HEK293T (cell line): ENCODE measurements at regions of chr6 and their contacts with region 1.

Region 1: DNA sequence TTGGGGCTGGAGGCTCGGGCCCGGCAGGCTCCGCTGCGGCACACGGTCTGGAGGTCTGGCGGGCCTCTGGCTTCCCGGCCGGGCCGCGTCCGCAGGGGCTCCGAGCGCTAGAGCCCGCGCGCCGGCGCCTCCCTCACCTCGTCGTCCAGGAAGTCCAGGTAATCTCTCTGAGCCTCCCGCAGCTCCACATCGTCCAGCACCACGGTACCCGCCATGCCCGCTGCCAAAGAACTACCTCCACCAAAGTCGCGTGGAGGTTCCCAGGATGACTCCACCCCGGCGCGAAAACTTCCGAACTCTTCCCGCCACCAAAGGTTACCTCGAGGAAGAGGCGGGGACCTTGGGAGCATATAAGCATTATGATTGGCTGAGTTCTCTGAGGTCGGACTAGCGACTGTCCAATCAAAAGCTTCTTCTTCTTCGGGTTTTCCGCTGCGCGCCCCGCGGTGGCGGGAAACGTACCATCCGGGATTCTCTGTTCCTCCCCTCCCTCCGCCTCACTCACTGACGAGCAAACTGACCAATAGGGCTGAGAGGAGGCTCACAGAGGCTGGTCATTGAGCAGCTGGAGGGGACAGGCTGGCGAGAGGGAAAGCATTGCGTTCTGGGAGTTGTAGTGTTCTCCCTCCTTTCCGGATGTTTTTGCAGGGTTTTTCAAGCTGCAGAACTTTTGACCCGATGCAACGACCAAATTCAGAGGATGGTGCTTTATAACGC is at the start of gene MCM3:
- DNase-seq: peak; percentile 92

Region 2: GRCh38 chr6:52186480-52186879 is 98.1 kb before region 1 on chr6:
- CTCF ChIA-PET with region 1: no interaction called
- POLR2A ChIA-PET with region 1: no interaction called
- DNase-seq: no peak

Region 3: DNA sequence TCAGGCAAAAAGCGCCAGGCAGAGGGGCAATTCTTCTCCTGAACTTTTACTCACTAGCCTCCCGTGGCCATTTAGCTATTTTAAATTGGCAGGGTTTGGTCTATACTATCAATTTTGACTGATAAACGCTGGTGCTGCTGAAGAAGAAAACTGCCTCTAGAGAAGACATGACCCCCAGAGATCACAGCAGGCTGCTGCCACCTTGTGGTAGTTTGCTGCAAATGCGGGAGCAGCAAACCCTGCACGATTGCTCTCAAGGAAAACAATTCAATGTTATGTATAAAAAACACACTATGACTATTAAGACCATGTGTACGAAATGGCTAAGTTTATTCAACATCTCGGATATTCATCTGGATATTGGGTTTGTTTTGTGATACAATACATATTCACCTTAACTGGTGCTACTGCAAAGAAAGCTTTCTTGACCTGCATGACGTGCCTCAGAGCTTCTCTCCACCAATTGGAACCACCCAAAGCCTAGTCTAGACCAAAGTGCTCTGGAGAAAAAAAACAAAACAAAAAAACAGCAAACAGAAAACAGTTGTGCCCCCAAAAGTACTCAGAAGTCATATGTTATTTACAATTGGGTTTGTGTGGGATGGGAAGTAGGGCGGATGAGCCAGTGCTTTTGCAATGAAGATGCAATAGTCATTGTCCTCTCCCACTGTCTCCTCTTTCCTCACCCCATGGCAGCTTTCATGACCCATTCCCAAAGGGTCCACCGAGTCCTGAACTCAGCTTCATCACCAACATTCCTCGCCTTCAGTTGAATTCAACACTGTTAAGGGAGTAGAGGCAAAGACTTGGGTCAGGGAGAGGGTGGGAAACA is 20.7 kb before region 1 on chr6:
- CTCF ChIA-PET with region 1: interaction called, 5 read pairs
- POLR2A ChIA-PET with region 1: interaction called, 10 read pairs
- DNase-seq: peak; percentile 70

Region 4: GRCh38 chr6:52361945-52362442 is 77.4 kb after region 1 on chr6 and contains the start of gene PAQR8:
- CTCF ChIA-PET with region 1: interaction called, 5 read pairs
- POLR2A ChIA-PET with region 1: interaction called, 69 read pairs
- DNase-seq: peak; percentile 86

Region 5: DNA sequence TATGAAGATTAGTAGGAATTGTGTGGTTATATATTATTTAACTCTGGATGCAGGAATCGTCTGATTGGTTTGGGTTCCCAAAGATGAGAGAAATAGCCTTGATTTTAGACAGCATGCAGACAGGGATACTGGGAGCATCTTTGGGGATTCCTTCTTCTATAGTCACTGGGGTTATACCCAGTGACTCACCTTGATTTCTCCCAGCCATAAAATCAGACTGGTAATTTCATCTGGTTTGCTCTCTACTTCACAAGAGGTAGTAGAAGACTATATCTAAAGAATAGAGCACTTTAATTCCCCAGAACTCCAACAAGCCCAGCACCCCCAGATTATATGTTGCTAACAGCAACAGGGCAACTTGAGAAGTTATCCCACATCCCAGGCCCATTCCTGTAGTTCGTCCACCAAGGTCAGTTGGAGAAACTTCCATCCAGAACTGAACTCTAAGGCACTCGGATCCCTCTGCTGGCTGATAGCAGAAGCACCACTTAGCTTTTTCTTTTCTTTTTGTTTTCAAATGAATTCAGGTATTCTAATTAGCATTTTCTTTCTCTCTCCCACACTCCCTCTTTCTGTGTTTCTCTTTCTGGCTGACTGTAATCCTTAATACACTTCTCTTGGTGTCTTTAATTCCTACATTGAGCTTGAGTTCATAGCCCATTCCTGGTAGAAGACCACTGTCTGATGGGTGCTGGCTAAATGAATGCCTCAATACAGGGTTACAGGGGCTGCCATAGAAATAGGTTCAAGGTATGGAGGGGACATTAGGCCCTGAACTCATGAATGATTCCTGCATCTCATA is 115.1 kb after region 1 on chr6:
- CTCF ChIA-PET with region 1: interaction called, 21 read pairs
- POLR2A ChIA-PET with region 1: interaction called, 18 read pairs
- DNase-seq: peak; percentile 65

Region 6: DNA sequence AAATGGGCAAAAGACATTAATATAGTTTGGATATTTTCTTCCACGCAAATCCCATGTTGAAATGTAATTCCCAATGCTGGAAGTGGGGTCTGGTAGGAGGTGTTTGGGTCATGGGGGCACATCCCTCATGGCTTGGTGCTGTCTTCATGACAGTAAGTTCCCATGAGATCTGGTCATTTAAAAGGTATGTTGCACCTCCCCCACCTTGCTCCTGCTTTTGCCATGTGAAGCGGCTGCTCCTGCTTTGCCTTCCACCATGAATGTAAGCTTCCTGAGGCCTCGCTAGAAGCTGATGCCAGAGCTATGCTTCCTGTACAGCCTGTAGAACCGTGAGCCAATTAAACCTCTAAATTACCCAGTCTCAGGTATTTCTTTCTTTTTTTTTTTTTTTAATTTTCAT is 370.0 kb after region 1 on chr6:
- CTCF ChIA-PET with region 1: no interaction called
- POLR2A ChIA-PET with region 1: no interaction called
- DNase-seq: no peak